Tibial artery (tissue), 4 donors: ENCODE measurements at regions of chr15 and their contacts with region 1.

Region 1: DNA sequence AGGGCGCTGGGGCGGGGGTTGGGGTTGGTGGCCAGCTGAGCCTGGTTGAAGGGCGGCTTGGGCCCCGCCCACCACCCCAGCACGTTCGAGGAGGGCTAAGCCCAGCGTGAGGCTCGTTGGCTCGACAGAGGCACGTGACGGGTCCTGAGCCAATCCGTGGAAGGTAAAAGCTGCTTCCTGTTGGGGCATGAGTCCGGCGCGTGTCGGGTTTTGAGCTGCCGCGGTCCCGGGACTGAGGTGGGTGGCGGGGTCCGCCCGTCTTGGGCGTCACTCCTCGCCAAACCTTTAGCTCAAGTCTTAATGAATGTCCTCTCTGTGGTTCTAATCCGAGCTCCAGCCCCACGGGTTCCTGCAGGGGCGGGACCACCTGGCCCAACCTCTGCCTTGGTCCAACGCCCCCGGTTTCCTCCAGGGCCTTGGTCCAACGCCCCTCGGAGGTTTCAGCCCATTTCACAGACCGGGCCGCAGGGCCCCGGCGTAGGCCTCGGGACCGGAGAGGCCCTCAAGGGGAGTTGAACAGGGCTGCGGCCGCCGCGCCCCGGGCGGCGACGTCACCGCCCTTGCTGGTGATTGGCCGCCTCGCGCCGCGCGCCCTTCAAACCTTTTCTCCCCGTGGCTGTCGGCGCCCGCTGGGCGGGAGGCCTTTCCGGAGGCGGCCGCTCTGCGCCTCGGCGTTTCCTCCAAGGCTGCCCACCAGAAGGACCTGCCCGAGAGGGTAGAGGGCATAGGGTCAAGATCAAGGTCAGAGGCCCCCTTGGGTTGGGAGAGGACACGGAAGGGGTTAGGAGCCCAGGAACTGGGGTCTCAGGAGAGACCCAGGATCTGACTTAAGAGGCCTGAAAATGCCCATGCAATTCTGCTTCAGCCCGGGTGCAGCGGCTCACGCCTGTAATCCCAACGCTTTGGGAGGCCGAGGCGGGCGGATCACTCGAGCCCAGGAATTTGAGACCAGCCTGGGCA is at the start of gene RCCD1:
- DNase-seq: peak; percentile 95 to 98
- H3K4me3 ChIP-seq: peak within 1 kb of the TSS; percentile 80 to 87
- H3K27ac ChIP-seq: peak within 1 kb of the TSS; percentile 93 to 96
- H3K4me1 ChIP-seq: peaks cover 0 to 50% (median 42%) of the 10 kb centered on the region in 4 donors
- H3K27me3 ChIP-seq: no peaks in the 10 kb centered on the region
- CTCF ChIP-seq: no peak

Region 2: DNA sequence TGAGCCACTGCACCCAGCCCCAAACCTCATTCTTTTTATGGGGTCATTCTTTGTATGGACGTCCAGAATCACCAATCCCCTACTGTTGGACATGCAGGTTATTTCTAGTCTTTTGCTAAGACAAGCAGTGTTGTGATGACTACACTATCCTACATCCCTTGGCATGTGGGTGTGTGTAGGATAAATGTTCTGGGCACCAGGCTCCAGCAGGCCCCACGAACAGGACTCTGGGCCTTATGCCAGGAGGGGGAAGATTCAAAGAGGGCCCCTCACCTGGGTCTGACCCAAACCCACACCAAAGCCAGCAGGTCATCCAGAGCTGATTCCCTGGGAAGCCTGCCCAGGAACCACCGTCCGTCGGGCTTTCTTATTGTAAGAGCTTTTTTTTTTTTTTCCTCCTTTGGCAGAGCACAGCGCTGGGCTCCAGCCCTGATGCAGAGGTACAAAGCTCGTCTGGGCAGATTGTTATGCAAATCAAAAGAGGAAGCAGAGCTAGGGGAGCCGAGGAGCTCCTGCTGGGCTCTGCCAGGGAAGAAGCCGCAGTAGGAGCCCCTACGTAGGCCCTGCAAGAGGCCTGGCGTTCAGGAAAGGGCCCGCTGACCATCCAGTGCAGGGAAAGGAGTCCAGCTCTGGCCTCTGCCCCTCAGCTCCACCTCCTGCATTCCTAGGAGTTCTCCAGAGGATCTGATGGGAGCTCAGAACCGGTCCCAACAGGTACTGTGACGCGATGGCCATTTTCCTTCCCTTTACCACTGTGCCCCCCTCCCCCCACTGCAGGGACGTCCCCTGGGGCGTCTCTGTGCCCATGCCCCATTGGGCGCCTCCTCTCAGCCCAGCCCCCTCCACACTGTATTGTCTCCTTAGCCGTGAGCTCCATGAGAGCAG is 115.6 kb before region 1 on chr15:
- intact Hi-C with region 1: no loop called
- DNase-seq: no peak
- H3K4me3 ChIP-seq: no peak overlapping the region
- H3K27ac ChIP-seq: no peak overlapping the region
- H3K4me1 ChIP-seq: peaks cover 0 to 4% (median 0%) of the 10 kb centered on the region in 4 donors
- H3K27me3 ChIP-seq: no peaks in the 10 kb centered on the region
- CTCF ChIP-seq: no peak

Region 3: GRCh38 chr15:90994417-90995311 is 39.7 kb after region 1 on chr15 and contains the start of gene PRC1:
- intact Hi-C with region 1: loop called (anchors 5 kb)
- DNase-seq: peak; percentile 98 to 99
- H3K4me3 ChIP-seq: peak within 1 kb of the TSS; percentile 76 to 88
- H3K27ac ChIP-seq: peak within 1 kb of the TSS; percentile 84 to 85
- H3K4me1 ChIP-seq: peaks cover 0 to 12% (median 4%) of the 10 kb centered on the region in 4 donors
- H3K27me3 ChIP-seq: no peaks in the 10 kb centered on the region
- CTCF ChIP-seq: no peak

Region 4: GRCh38 chr15:91049378-91050127 is 94.6 kb after region 1 on chr15:
- intact Hi-C with region 1: loop called (anchors 5 kb)
- DNase-seq: peak in 1 of 2 donors; percentile 62
- H3K4me3 ChIP-seq: no peak overlapping the region
- H3K27ac ChIP-seq: no peak overlapping the region
- H3K4me1 ChIP-seq: no peaks in the 10 kb centered on the region
- H3K27me3 ChIP-seq: peaks cover 0 to 9% of the 10 kb centered on the region in 2 donors
- CTCF ChIP-seq: peak; percentile 60 to 67